Activated CD8-positive, alpha-beta T cell treated with anti-CD3 and anti-CD28 coated beads for 36 hours (primary cell): ENCODE measurements at regions of chr17 and their contacts with region 1.

Region 1: GRCh38 chr17:16444258-16444886 is 29.0 kb downstream of the TRPV2 start:
- DNase-seq: no peak
- ATAC-seq: no peak
- H3K4me3 Mint-ChIP-seq: peak overlapping the region; percentile 5
- H3K27ac Mint-ChIP-seq: peak overlapping the region; percentile 53
- H3K4me1 Mint-ChIP-seq: peaks cover 70% of the 10 kb centered on the region
- H3K27me3 Mint-ChIP-seq: no peaks in the 10 kb centered on the region
- CTCF ChIP-seq: no peak

Region 2: GRCh38 chr17:16269658-16270057 is 174.7 kb before region 1 on chr17:
- CTCF ChIA-PET with region 1: no interaction called
- POLR2A ChIA-PET with region 1: no interaction called
- intact Hi-C with region 1: no loop called
- DNase-seq: no peak
- ATAC-seq: no peak
- H3K4me3 Mint-ChIP-seq: no peak overlapping the region
- H3K27ac Mint-ChIP-seq: peak overlapping the region; percentile 60
- H3K4me1 Mint-ChIP-seq: peaks cover 43% of the 10 kb centered on the region
- H3K27me3 Mint-ChIP-seq: no peaks in the 10 kb centered on the region
- CTCF ChIP-seq: no peak

Region 3: DNA sequence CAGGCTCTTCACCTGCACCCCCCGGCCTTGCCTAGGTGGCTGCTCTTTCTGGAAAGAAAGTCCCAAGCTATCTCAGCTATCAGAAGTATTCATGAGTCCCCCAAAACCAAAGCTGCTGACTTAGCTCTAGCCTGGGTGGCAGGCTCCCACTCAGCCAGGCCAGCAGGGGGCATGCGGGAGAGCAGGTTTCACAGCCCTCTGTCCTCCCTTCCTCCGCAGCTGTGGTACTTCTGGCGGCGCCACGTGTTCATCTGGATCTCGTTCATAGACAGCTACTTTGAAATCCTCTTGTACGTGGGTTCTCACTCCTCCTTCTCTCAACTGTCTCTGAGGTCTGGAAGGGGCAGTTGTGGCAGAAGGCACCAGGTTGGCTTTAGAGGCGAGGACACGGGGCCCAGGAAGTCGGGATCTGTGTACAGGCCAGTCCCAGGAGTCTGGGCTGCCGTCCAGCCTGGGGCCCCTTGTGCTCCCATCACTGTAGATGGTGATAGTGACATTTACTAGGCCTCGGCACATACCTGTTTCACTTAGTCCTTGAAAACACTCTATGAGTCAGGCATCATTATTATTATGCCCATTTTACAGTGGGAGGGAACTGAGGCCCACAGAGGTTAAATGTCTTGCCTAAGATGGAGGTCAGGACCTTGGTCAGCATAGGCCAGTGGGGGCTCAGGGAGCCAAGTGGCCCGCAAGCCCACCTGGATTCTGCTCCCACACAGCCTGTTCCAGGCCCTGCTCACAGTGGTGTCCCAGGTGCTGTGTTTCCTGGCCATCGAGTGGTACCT is 16.1 kb before region 1 on chr17:
- CTCF ChIA-PET with region 1: interaction called, 39 read pairs
- POLR2A ChIA-PET with region 1: interaction called, 43 read pairs
- intact Hi-C with region 1: no loop called
- DNase-seq: peak; percentile 75
- ATAC-seq: peak; percentile 91
- H3K4me3 Mint-ChIP-seq: no peak overlapping the region
- H3K27ac Mint-ChIP-seq: peak overlapping the region; percentile 42
- H3K4me1 Mint-ChIP-seq: peaks cover 7% of the 10 kb centered on the region
- H3K27me3 Mint-ChIP-seq: no peaks in the 10 kb centered on the region
- CTCF ChIP-seq: peak; percentile 59